ENCODE measurements at regions of chr1 and their contacts with region 1.

Region 1: DNA sequence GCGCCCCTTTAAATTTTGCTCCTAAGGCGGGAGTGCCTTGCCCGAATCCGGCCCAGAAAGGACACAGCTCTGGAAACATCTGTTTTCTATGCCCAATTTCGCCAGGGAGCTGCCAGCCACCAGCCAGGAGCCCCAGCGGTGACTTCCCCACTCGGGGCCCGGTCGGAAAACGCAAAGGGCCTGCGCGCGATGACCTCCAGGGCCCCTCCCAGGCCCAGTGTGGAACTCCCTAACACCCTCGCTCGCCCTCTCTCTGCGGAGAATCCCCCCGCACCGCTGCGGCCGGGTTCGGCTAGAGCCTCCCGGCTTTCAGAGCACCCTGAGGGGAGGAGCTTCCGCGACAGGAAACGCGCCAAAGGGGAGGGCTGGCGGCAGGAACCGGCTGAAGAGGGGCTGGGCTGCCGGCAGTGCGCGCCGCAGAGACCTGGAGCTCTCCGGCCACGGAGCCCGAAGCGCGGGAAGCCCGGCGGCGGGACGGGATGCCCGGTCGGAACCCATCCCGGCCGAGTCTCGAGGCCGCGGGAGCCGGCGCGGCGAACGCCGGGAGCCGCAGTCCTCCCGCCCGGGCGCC is 505 bp downstream of the CLSPN start:
- DNase-seq: peak; percentile 92 to 94 (median 93)
- H3K4me3 ChIP-seq: peak overlapping the region; percentile 78 to 95 (median 88)
- H3K27ac ChIP-seq: peak overlapping the region; percentile 74 to 87
- H3K4me1 ChIP-seq: peaks cover under 1 to 14% (median 9%) of the 10 kb centered on the region in 4 experiments
- H3K27me3 ChIP-seq: no peaks in the 10 kb centered on the region

Region 2: GRCh38 chr1:35753626-35754260 is 15.5 kb before region 1 on chr1:
- CTCF ChIA-PET with region 1: interaction called, 15 read pairs
- POLR2A ChIA-PET with region 1: interaction called, 3 read pairs
- DNase-seq: no peak
- H3K4me3 ChIP-seq: no peak overlapping the region
- H3K27ac ChIP-seq: no peak overlapping the region
- H3K4me1 ChIP-seq: no peaks in the 10 kb centered on the region
- H3K27me3 ChIP-seq: no peaks in the 10 kb centered on the region